ENCODE measurements at regions of chr20 and their contacts with region 1.

Region 1: DNA sequence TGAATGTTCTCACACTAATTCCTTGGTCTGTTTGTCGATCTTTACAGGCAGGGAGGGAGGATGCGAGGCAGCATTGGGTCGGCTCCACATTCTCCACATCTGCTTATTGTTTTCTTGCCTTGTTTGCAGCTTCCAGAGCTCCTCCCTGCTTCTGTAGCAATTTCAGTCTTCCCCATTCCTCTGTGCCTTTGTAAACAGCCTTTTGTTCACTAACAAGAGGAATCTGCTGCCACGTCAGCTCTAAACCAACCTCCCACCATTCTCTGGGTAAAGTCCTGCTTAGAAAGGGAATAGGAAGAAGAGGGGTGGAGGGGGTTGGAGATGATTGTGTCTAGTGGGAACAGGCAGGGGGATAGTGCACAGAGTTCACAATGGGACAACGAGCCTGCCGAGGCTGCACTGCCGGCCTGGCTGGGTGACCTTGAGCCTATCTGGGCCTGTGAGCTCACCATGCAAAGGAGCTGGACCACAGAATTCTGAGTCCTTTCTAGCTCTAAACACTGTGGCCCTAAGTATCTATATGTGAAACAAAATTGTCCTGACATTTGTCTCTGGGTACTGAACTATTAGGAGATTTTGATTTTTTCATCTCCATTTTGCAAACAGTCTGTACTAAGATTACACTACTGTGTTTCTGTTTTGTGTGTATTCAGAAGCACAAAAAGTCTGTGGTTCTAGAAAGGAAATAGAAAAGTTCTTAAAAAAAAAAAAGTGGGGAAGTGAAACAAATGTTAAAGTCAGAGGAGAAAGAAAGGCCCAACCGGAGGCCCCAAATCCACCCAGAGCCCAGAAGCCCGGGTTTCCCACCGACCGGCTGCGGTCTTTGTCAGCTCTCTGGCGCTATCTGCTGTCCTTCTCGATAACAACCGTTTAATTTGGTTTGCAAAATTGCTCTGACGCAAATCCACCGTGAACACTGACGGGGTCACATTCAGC is 1.4 kb upstream of the PRND start:
- DNase-seq: peak; percentile 43
- H3K4me3 ChIP-seq: no peak overlapping the region
- H3K27ac ChIP-seq: no peak overlapping the region
- H3K27me3 ChIP-seq: peaks cover 9% of the 10 kb centered on the region
- CTCF ChIP-seq: peak; percentile 82

Region 2: GRCh38 chr20:3846740-3847428 is 873.4 kb before region 1 on chr20 and contains the start of gene MAVS:
- CTCF ChIA-PET with region 1: no interaction called
- POLR2A ChIA-PET with region 1: no interaction called
- DNase-seq: peak; percentile 24
- H3K4me3 ChIP-seq: peak within 1 kb of the TSS; percentile 83
- H3K27ac ChIP-seq: peak within 1 kb of the TSS; percentile 21
- H3K27me3 ChIP-seq: no peaks in the 10 kb centered on the region
- CTCF ChIP-seq: no peak
- polyA plus RNA-seq, gene MAVS: 16.4 and 18.2 TPM in 2 replicates

Region 3: DNA sequence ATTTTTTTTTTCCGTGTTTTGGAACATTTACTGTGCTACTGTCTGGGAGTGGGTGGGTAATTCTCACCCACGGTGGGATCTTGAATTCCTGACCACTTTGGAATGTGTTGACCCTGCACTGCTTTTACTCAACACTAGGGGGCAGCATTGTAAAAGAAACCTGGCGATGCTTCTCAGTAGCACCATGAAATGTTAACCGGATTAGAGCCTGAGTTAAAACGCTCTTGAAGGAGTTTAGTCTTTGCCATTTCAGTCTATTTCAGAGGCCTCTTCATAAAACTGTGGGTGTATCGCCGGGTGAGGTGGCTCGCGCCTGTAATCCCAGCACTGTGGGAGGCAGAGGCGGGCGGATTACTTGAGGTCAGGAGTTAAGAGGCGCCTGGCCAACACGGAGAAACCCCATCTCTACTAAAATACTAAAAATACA is 113.0 kb before region 1 on chr20:
- CTCF ChIA-PET with region 1: interaction called, 72 read pairs
- POLR2A ChIA-PET with region 1: no interaction called
- DNase-seq: peak; percentile 36
- H3K4me3 ChIP-seq: no peak overlapping the region
- H3K27ac ChIP-seq: no peak overlapping the region
- H3K27me3 ChIP-seq: peaks cover 5% of the 10 kb centered on the region
- CTCF ChIP-seq: peak; percentile 96

Region 4: GRCh38 chr20:4613718-4614620 is 106.3 kb before region 1 on chr20:
- CTCF ChIA-PET with region 1: interaction called, 72 read pairs
- POLR2A ChIA-PET with region 1: no interaction called
- DNase-seq: no peak
- H3K4me3 ChIP-seq: no peak overlapping the region
- H3K27ac ChIP-seq: no peak overlapping the region
- H3K27me3 ChIP-seq: peaks cover 10% of the 10 kb centered on the region
- CTCF ChIP-seq: peak; percentile 49

Region 5: GRCh38 chr20:4684837-4685413 is 35.4 kb before region 1 on chr20:
- CTCF ChIA-PET with region 1: no interaction called
- POLR2A ChIA-PET with region 1: no interaction called
- DNase-seq: peak; percentile 60
- H3K4me3 ChIP-seq: no peak overlapping the region; the same call in 1 of the 2 replicates
- H3K27ac ChIP-seq: peak overlapping the region; percentile 66
- H3K27me3 ChIP-seq: no peaks in the 10 kb centered on the region
- CTCF ChIP-seq: peak; percentile 15; the same call in 1 of the 2 replicates

Measured in AG04450 (cell line).